Endothelial cell of umbilical vein (primary cell): ENCODE measurements at regions of chr2 and their contacts with region 1.

Region 1: GRCh38 chr2:191677646-191678436 is at the start of gene NABP1:
- DNase-seq: peak; percentile 97
- H3K4me3 ChIP-seq: peak within 1 kb of the TSS; percentile 54 to 93 (median 88)
- H3K27ac ChIP-seq: peak within 1 kb of the TSS; percentile 97
- H3K4me1 ChIP-seq: peaks cover 48% of the 10 kb centered on the region
- H3K27me3 ChIP-seq: no peaks in the 10 kb centered on the region
- CTCF ChIP-seq: no peak
- POLR2A ChIP-seq: peak; percentile 100
- total RNA-seq, gene NABP1: 42.4 and 47.6 TPM in 2 replicates

Region 2: DNA sequence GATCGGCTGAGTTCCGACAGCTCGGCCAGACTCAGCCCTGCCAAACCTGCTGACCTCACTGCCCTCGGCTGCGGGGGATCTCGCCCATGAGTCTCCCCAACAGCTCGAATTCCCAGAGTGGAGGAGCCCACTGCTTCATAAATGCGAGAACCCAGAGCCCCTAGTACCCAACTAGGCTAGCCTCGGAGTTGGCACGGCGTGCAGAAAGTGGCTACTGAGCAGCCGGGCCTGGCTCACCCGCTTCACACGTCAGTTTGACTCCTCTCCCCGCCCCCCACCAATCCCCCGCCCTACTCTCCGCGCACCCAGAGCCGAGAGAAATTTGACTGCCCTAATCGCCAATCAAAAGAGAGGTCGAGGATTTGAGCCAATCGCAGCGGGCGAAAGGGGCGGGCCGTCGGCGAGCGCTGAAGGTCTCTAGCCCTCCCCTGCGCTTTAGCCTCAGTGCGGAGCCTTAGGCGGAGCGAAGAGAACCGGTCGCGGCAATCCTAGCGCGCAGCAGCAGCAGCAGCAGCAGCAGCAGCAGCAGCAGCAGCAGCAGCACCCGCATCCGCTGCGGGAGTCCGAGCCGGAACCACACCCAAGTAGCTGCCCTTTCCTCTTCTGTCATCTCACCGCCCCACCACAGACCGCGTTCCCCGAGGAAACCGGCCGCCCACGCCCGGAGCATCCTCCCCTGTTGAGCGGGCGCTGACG is 797.3 kb before region 1 on chr2 and contains the start of gene GLS:
- CTCF ChIA-PET with region 1: no interaction called
- POLR2A ChIA-PET with region 1: interaction called, 3 read pairs
- dilution Hi-C with region 1: no loop called
- intact Hi-C with region 1: loop called (anchors 2 kb)
- DNase-seq: peak; percentile 98
- H3K4me3 ChIP-seq: peak within 1 kb of the TSS; percentile 80 to 99 (median 98)
- H3K27ac ChIP-seq: peak within 1 kb of the TSS; percentile 83
- H3K4me1 ChIP-seq: peaks cover 32% of the 10 kb centered on the region
- H3K27me3 ChIP-seq: no peaks in the 10 kb centered on the region
- CTCF ChIP-seq: no peak
- POLR2A ChIP-seq: peak; percentile 99
- total RNA-seq, gene GLS: 181 and 183 TPM in 2 replicates

Region 3: DNA sequence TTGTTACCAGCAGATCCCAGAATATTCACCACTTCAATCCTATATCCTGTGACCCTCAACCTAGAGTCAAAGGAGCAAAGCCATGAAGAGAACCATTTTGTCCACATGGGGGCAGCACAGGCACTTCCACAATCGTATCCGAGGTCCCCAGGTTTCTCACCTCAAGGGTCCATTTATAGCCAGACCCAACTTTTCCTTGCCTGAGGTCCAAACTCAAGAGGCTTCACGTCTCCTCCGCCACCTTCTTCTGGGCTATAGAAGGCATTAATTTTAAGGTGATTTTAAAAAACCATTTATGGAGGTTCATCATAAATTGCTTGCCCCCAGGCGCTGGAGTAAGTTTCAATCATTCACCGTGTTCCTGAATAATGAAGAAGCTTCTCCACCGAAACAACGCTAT is 111.5 kb before region 1 on chr2:
- CTCF ChIA-PET with region 1: interaction called, 19 read pairs
- POLR2A ChIA-PET with region 1: interaction called, 10 read pairs
- dilution Hi-C with region 1: no loop called
- intact Hi-C with region 1: loop called (anchors 1 kb)
- DNase-seq: peak; percentile 54
- H3K4me3 ChIP-seq: no peak overlapping the region
- H3K27ac ChIP-seq: no peak overlapping the region
- H3K4me1 ChIP-seq: peaks cover 3% of the 10 kb centered on the region
- H3K27me3 ChIP-seq: peaks cover 6 to 16% of the 10 kb centered on the region in 2 experiments
- CTCF ChIP-seq: peak; percentile 64 to 82
- POLR2A ChIP-seq: no peak

Region 4: GRCh38 chr2:191637182-191638078 is 40.4 kb before region 1 on chr2:
- CTCF ChIA-PET with region 1: interaction called, 3 read pairs
- POLR2A ChIA-PET with region 1: interaction called, 25 read pairs
- dilution Hi-C with region 1: no loop called
- intact Hi-C with region 1: loop called (anchors 5 kb)
- DNase-seq: peak; percentile 66
- H3K4me3 ChIP-seq: peak overlapping the region in 1 of 3 experiments; percentile 3
- H3K27ac ChIP-seq: peak overlapping the region; percentile 77
- H3K4me1 ChIP-seq: peaks cover 22% of the 10 kb centered on the region
- H3K27me3 ChIP-seq: no peaks in the 10 kb centered on the region
- CTCF ChIP-seq: no peak
- POLR2A ChIP-seq: no peak

Region 5: GRCh38 chr2:191706791-191707190 is 28.9 kb after region 1 on chr2:
- CTCF ChIA-PET with region 1: no interaction called
- POLR2A ChIA-PET with region 1: interaction called, 18 read pairs
- dilution Hi-C with region 1: no loop called
- intact Hi-C with region 1: no loop called
- DNase-seq: no peak
- H3K4me3 ChIP-seq: no peak overlapping the region
- H3K27ac ChIP-seq: no peak overlapping the region
- H3K4me1 ChIP-seq: no peaks in the 10 kb centered on the region
- H3K27me3 ChIP-seq: no peaks in the 10 kb centered on the region
- CTCF ChIP-seq: no peak
- POLR2A ChIP-seq: no peak

Region 6: GRCh38 chr2:191976436-191976835 is 298.6 kb after region 1 on chr2:
- CTCF ChIA-PET with region 1: no interaction called
- POLR2A ChIA-PET with region 1: no interaction called
- dilution Hi-C with region 1: no loop called
- intact Hi-C with region 1: loop called (anchors 10 kb)
- DNase-seq: peak; percentile 99
- H3K4me3 ChIP-seq: no peak overlapping the region
- H3K27ac ChIP-seq: peak overlapping the region; percentile 86
- H3K4me1 ChIP-seq: peaks cover 44% of the 10 kb centered on the region
- H3K27me3 ChIP-seq: no peaks in the 10 kb centered on the region
- CTCF ChIP-seq: no peak
- POLR2A ChIP-seq: peak; percentile 64